ENCODE measurements at regions of chr1 and their contacts with region 1.

Region 1: GRCh38 chr1:85344256-85344694 is 67.8 kb upstream of the BCL10 start:
- DNase-seq: peak; percentile 45
- H3K4me3 Mint-ChIP-seq: no peak overlapping the region
- H3K27ac Mint-ChIP-seq: peak overlapping the region; percentile 16
- H3K4me1 Mint-ChIP-seq: peaks cover 16% of the 10 kb centered on the region
- H3K27me3 Mint-ChIP-seq: no peaks in the 10 kb centered on the region
- CTCF ChIP-seq: peak; percentile 56

Region 2: GRCh38 chr1:85297855-85298629 is 46.2 kb before region 1 on chr1:
- CTCF ChIA-PET with region 1: interaction called, 11 read pairs
- POLR2A ChIA-PET with region 1: no interaction called
- intact Hi-C with region 1: no loop called
- DNase-seq: peak; percentile 96
- H3K4me3 Mint-ChIP-seq: peak overlapping the region; percentile 52
- H3K27ac Mint-ChIP-seq: peak overlapping the region; percentile 40
- H3K4me1 Mint-ChIP-seq: peaks cover 23% of the 10 kb centered on the region
- H3K27me3 Mint-ChIP-seq: no peaks in the 10 kb centered on the region
- CTCF ChIP-seq: no peak

Region 3: GRCh38 chr1:85322655-85323054 is 21.6 kb before region 1 on chr1:
- CTCF ChIA-PET with region 1: interaction called, 10 read pairs
- POLR2A ChIA-PET with region 1: interaction called, 3 read pairs
- intact Hi-C with region 1: no loop called
- DNase-seq: no peak
- H3K4me3 Mint-ChIP-seq: no peak overlapping the region
- H3K27ac Mint-ChIP-seq: no peak overlapping the region
- H3K4me1 Mint-ChIP-seq: peaks cover 17% of the 10 kb centered on the region
- H3K27me3 Mint-ChIP-seq: no peaks in the 10 kb centered on the region
- CTCF ChIP-seq: no peak

Region 4: DNA sequence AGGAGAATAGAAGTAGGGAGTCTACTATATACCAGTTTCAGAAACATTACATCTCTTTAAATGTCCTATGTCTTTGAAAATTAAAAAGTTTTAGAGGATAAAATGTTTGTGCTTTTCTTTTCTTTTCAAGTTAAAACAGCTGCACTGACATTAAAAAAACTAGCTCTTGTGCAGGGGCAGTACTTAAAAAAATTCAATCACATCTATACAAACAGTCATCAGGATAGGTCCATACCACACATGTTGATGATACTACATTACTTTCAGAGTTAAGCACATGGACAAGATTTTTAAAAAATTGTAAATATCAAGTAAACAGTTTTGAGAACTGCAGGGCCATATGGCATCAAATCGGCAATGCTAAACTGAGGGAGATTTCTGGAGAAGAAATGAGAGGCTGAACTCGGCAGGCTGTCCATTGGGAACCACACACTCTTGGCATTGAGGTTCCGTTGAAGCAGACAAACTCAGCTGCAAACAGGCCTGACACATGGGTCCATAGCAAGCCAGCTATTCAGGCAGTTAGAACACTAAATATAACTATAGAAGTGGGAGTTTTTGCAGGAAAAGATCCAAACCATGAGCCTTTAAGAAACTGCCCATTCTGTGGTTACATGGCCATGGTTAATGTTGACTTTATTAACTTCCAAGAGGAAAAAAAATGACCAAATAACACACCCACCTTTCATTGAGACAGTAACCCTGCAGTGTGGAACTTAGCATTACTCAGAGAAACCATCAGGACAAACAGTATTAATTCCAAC is 16.6 kb after region 1 on chr1:
- CTCF ChIA-PET with region 1: interaction called, 13 read pairs
- POLR2A ChIA-PET with region 1: interaction called, 3 read pairs
- intact Hi-C with region 1: no loop called
- DNase-seq: peak; percentile 19
- H3K4me3 Mint-ChIP-seq: no peak overlapping the region
- H3K27ac Mint-ChIP-seq: no peak overlapping the region
- H3K4me1 Mint-ChIP-seq: peaks cover 10% of the 10 kb centered on the region
- H3K27me3 Mint-ChIP-seq: no peaks in the 10 kb centered on the region
- CTCF ChIP-seq: no peak

Region 5: DNA sequence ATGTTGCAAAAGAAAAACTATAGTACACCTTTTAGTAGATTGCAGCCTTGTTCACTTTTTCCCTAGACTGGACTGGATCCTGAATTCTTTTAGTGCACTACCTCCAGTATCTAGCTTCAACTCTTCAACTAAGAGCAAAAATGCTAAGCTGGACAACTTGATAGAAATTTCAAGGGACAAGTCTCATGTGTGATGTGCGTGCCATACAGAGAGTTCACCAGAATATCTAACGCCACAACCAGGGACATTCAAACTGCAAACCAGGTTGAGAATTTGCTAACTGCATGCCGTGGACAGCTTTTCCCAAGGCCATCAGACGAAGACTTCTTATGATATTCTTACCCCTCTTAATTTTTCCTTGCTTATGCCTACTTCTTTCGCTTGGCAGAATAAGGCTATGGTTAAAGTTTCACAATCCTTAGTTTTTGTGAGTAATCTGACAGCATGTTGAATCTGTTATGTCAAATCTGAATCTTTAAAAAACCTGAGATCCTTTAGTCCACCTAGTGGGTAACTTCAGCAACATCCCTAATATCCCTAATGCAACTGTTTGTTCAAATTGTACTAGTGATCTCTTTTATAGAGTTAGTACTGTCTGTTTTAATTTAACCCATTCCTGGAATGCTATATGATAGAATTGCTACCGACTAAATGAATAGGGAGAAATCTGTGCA is 54.3 kb after region 1 on chr1:
- CTCF ChIA-PET with region 1: interaction called, 26 read pairs
- POLR2A ChIA-PET with region 1: interaction called, 4 read pairs
- intact Hi-C with region 1: loop called (anchors 5 kb)
- DNase-seq: peak; percentile 66
- H3K4me3 Mint-ChIP-seq: no peak overlapping the region
- H3K27ac Mint-ChIP-seq: no peak overlapping the region
- H3K4me1 Mint-ChIP-seq: peaks cover 7% of the 10 kb centered on the region
- H3K27me3 Mint-ChIP-seq: no peaks in the 10 kb centered on the region
- CTCF ChIP-seq: peak; percentile 44

Region 6: GRCh38 chr1:85692730-85693314 is 348.5 kb after region 1 on chr1:
- CTCF ChIA-PET with region 1: interaction called, 10 read pairs
- POLR2A ChIA-PET with region 1: no interaction called
- intact Hi-C with region 1: no loop called
- DNase-seq: peak; percentile 52
- H3K4me3 Mint-ChIP-seq: no peak overlapping the region
- H3K27ac Mint-ChIP-seq: peak overlapping the region; percentile 65
- H3K4me1 Mint-ChIP-seq: peaks cover 10% of the 10 kb centered on the region
- H3K27me3 Mint-ChIP-seq: no peaks in the 10 kb centered on the region
- CTCF ChIP-seq: peak; percentile 60